Heart right ventricle (tissue), 16 donors: ENCODE measurements at regions of chr5 and their contacts with region 1.

Region 1: DNA sequence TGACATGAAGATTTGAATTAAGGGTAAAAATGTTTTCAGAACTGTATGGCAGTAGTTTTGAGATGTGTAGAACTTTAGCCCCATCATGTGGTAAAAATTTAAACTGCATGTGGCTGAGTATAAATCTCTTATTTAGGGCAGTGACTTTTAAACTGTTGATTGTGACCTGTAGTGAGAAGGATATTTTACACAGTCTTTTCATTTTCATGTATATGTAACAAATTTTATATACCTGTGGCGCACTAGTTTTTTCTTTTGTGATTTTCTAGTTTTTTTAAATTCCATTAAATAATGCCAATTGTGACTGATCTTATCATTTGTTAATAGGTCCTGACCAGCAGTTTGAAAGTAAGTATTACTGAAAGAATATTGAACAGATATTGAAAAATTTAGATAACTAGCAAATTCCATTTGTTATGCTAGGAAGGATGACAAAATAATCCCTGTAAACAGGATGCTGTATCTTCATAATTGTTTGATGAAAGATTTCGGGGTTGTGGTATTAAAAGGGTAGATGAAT is 47.2 kb downstream of the GPBP1 start:
- DNase-seq: peak in 1 of 2 donors; percentile 48
- ATAC-seq: peak in 6 of 8 donors; percentile 29 to 79 (median 68)
- H3K4me3 ChIP-seq: no peak overlapping the region
- H3K27ac ChIP-seq: no peak overlapping the region
- H3K4me1 ChIP-seq: peaks cover 0 to 25% (median 15%) of the 10 kb centered on the region in 9 donors
- H3K27me3 ChIP-seq: no peaks in the 10 kb centered on the region
- CTCF ChIP-seq: peak; percentile 83 to 96 (median 92)

Region 2: GRCh38 chr5:56900858-56901578 is 320.1 kb before region 1 on chr5:
- intact Hi-C with region 1: loop called in 9 of 10 experiments (anchors 2 to 10 kb)
- DNase-seq: peak in 1 of 2 donors; percentile 23
- ATAC-seq: peak in 7 of 8 donors; percentile 35 to 78 (median 58)
- H3K4me3 ChIP-seq: no peak overlapping the region
- H3K27ac ChIP-seq: no peak overlapping the region
- H3K4me1 ChIP-seq: peaks cover 0 to 6% (median 0%) of the 10 kb centered on the region in 9 donors
- H3K27me3 ChIP-seq: no peaks in the 10 kb centered on the region
- CTCF ChIP-seq: peak; percentile 56 to 85 (median 75)

Region 3: DNA sequence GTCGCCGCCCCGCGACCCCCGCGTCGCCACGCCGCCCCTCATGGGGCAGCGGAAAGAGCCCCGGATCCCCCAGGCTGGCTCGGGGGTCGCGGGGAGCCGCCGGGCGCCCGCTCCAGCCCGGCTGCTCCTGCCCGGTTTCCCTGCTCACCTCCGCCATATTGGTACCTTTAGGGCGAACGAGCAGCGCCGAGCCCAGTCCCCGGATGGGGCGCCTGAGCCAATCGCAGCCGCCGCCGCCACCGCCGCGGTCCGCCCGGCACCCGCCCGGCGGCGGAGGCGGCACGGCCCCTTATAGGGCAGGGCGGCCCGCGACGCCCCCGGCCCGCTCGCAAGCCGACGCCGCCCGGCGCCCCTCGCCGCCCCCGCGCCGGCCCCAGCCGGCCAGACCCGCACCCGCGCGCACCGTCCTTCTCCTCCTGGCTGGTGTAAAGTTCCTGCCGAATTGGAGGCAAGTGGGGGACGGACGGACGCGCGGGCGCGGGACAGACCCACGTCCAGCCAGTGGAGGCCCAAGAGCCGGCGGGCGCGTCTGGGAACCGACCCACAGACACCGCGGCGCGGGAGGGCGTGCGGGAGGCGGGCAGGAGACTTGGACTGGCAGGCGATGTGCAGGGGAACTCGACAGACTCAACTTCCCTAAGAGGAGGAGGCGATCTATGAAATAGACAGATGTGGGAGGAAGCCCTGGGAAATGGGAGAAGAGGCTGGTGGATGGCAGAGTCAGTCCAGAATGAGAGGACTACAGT is 269.0 kb before region 1 on chr5 and contains the start of gene MIER3:
- intact Hi-C with region 1: loop called in 4 of 10 experiments (anchors 5 kb)
- DNase-seq: peak; percentile 75 to 83
- ATAC-seq: peak; percentile 89 to 96 (median 96)
- H3K4me3 ChIP-seq: peak within 1 kb of the TSS; percentile 66 to 96 (median 88)
- H3K27ac ChIP-seq: peak within 1 kb of the TSS; percentile 74 to 95 (median 86)
- H3K4me1 ChIP-seq: peaks cover 0 to 27% (median 18%) of the 10 kb centered on the region in 9 donors
- H3K27me3 ChIP-seq: peaks cover 0 to 31% (median 0%) of the 10 kb centered on the region in 7 donors
- CTCF ChIP-seq: no peak
- total RNA-seq, gene MIER3: 9.8 to 17.9 (median 13.0) TPM

Region 4: DNA sequence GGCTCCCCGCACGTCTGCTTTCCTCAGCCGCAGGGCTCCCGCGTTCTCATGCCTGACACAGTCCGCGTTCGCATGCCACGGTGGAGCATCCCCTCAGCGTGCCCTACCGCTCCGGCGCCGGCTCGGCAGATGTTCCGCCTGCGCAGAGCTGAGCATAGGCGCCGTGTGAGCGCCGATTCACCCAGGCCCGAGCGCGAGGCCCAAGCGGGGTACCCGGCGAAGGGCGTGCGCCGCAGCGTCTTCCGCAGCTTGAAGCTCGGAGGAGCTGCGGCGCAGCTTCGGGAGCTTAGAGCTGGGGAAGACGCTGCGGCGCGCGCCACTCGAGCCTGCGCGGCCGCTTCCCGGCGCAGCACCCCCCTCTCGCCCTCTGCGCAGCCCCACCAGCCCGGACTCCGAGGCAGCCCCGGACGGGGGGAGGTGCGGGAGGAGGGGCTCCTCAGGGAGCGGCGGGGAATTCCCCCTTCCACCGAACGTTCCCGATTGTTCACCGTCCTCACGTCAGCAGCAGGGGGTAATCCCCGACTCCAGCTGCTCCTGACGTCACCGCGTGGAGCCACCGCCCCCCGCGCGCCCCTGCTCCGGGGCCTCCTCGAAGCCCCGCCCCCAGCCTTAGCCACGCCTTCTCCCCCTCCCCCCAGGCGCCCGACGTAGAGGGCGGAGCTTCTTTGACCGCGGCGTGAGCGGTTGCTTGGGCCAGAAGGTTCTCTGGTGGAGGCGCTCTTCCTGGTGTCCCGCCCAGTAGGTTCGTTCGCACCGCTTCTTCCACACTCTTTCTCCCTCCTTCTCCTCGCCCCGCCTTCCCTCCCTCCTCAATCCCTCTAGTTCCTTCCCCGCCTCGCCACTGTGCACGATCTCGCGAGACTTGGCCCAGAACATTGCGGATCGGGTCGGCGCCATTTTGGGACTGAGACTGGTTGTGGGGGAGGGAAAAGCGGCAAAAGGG is 47.7 kb before region 1 on chr5 and contains the start of gene GPBP1:
- intact Hi-C with region 1: loop called in 4 of 10 experiments (anchors 2 to 5 kb)
- DNase-seq: peak; percentile 98 to 100
- ATAC-seq: peak; percentile 92 to 97 (median 94)
- H3K4me3 ChIP-seq: peak within 1 kb of the TSS; percentile 61 to 98 (median 82)
- H3K27ac ChIP-seq: peak within 1 kb of the TSS; percentile 92 to 100 (median 98)
- H3K4me1 ChIP-seq: peaks cover 6 to 46% (median 41%) of the 10 kb centered on the region in 9 donors
- H3K27me3 ChIP-seq: no peaks in the 10 kb centered on the region
- CTCF ChIP-seq: peak in 3 of 9 donors; percentile 6 to 8 (median 8)
- total RNA-seq, gene GPBP1: 48.1 to 69.3 (median 51.6) TPM